Ascending aorta (tissue), 2 donors: ENCODE measurements at regions of chr15 and their contacts with region 1.

Region 1: GRCh38 chr15:45790325-45790943 is 155.6 kb downstream of the SQOR start:
- DNase-seq: no peak
- H3K4me3 ChIP-seq: no peak overlapping the region
- H3K27ac ChIP-seq: no peak overlapping the region
- H3K4me1 ChIP-seq: no peaks in the 10 kb centered on the region
- H3K27me3 ChIP-seq: no peaks in the 10 kb centered on the region
- CTCF ChIP-seq: peak in 2 of 3 experiments; percentile 5 to 49

Region 2: DNA sequence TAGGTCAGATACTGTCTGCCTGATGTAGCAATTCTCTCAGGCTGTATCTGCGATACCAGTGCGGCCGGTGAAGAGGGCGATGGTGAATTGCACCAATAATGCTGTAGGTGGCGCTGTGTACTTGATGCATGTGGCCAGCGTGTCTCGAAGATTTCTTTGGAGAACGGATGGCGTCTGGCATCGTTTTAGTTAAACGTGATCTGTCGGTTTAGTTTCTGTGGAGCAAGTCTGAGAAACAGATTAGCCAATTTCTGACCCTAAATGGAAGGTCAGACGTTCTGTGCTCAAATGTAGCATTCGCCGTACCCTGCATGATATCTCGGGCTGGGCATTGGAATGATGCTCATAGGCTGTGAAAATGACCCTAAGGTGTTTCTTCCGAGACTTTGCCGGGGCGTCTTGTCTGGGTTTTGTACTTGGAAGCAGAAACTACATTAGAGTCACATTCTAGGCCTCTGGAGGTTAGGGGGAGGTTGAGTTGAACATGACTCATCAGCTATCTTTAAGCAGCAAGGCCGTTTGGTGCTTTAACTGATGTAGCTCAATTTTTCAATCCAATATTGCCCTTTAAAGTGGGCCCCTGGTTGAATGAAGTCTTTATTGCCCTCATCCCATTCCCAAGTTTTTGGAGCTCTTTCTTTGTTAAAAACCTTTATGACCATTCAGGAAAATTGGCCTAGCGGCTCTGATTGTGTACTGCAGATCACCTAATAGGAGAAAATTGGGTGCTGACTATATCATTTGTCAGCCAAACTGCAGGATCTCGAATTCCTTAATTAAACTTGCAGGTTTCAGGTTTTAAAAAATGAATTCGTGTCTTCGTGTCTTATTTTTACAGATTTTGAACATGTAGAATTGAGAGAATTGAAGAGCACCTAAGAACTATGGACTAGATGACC is 75.6 kb before region 1 on chr15:
- intact Hi-C with region 1: loop called (anchors 2 kb)
- DNase-seq: peak in 1 of 2 donors; percentile 84
- H3K4me3 ChIP-seq: peak overlapping the region; percentile 20 to 41
- H3K27ac ChIP-seq: no peak overlapping the region
- H3K4me1 ChIP-seq: no peaks in the 10 kb centered on the region
- H3K27me3 ChIP-seq: no peaks in the 10 kb centered on the region
- CTCF ChIP-seq: peak; percentile 58 to 93 (median 79)